ENCODE measurements at regions of chr15 and their contacts with region 1.

Region 1: DNA sequence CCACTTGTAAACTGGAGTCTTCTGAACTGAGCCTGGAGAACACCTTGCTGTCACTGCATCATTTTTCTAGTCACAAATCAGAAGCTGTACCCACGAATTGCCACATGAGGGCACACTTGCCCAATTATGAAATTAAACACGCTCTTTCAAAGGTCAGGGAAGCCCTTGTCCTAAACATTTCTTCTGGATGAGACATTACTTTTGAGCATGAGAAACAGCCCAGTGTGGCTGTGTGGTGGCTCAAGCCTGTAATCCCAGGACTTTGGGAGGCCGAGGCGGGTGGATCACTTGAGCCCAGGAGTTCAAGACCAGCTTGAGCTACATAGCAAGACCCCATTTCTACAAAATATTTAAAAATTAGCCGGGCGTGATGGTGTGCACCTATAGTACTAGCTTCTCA is 27.5 kb upstream of the CFAP161 start:
- DNase-seq: peak; percentile 64 to 77 (median 69)
- ATAC-seq: peak; percentile 87
- H3K4me3 ChIP-seq: no peak overlapping the region
- H3K27ac ChIP-seq: no peak overlapping the region
- H3K4me1 ChIP-seq: peaks cover 6% of the 10 kb centered on the region
- H3K27me3 ChIP-seq: no peaks in the 10 kb centered on the region
- CTCF ChIP-seq: peak; percentile 59 to 91 (median 88)
- POLR2A ChIP-seq: no peak

Region 2: DNA sequence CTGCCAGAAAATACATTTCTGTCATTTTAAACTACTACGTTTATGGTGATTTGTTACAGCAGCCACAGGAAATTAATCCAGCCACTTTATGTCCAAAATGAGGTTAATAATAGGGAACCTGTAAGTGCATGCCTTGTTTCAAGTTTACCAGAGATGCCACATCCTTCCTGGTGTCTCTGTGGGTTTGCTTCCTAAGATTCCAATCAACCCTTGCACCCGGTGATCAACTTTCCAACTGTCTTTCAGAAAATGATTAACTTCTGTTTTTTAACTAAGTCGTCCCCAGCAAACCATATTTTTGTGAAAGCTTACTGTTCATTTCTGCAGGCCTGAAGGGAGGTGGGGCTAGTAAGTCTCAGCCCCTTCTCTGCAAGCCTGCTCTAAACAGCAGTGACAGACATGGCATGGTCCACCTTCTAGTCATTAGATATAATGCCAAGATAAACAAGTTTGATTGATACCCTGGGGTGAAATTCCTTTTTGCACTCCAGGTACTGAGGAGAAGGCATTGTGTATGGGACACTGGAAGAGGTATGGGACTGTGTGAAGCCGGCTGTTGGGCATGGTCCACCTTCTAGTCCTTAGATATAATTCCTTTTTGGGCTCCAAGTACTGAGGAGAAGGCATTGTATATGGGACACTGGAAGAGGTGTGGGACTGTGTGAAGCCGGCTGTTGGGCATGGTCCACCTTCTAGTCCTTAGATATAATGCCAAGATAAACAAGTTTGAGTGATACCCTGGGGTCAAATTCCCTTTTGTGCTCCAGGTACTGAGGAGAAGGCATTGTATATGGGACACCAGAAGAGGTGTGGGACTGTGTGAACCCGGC is 278.5 kb after region 1 on chr15:
- intact Hi-C with region 1: loop called (anchors 10 kb)
- DNase-seq: peak in 3 of 4 donors; percentile 8 to 52 (median 15)
- ATAC-seq: peak; percentile 47
- H3K4me3 ChIP-seq: no peak overlapping the region
- H3K27ac ChIP-seq: no peak overlapping the region
- H3K4me1 ChIP-seq: peaks cover 13% of the 10 kb centered on the region
- H3K27me3 ChIP-seq: no peaks in the 10 kb centered on the region
- CTCF ChIP-seq: no peak
- POLR2A ChIP-seq: no peak

Measured in body of pancreas (tissue), 4 donors.